HepG2 (cell line): ENCODE measurements at regions of chr2 and their contacts with region 1.

Region 1: DNA sequence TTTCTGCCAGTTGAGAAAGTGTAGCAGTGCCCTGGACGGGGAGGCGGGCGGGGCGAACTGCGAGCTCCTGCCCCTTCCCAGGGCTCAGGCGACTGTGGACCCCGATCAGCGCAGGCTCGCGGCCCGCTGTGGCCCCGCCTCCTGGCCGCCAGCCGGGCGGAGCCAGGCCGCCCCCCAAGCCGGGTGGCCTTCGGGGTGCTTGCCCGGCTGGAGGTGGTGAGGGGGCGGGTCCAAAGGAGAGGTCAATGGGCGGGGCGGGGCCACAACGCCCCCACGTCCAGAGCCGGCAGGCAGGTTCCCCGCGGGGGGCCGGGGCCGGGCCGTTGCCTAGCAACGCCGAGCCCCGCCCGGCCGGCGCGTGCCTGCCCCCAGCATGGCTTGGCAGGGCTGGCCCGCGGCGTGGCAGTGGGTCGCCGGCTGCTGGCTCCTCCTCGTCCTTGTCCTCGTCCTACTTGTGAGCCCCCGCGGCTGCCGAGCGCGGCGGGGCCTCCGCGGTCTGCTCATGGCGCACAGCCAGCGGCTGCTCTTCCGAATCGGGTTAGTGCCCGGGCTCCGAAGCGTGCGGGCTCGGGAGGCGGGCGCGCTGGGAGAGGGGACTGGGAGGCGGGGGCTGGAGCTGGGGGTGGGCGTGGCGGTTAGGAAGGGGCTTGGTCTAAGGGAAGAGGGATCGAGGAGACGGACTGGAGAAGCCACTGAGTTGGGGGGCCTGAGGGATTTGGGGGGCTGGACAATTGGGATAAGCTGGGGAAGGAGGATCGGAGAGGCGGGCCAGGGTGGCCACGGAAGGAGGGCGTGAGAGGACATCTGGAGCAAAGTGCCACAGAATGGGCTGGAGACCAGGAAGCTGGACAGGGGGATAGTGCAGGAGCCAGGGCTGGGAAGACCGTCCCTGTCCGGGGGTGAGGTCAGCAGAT is 30.8 kb upstream of the TMBIM1 start:
- DNase-seq: peak; percentile 79
- ATAC-seq: peak; percentile 83
- H3K4me3 ChIP-seq: peak overlapping the region; percentile 64 to 99 (median 78)
- H3K27ac ChIP-seq: peak overlapping the region; percentile 87
- H3K4me1 ChIP-seq: peaks cover 35% of the 10 kb centered on the region
- H3K27me3 ChIP-seq: no peaks in the 10 kb centered on the region; a peak in 1 of 5 replicates
- CTCF ChIP-seq: peak; percentile 32
- EP300 ChIP-seq: peak in 1 of 2 experiments; percentile 17; a peak in 1 of 4 replicates
- POLR2A ChIP-seq: peak; percentile 78 to 93
- RAD21 ChIP-seq: no peak

Region 2: DNA sequence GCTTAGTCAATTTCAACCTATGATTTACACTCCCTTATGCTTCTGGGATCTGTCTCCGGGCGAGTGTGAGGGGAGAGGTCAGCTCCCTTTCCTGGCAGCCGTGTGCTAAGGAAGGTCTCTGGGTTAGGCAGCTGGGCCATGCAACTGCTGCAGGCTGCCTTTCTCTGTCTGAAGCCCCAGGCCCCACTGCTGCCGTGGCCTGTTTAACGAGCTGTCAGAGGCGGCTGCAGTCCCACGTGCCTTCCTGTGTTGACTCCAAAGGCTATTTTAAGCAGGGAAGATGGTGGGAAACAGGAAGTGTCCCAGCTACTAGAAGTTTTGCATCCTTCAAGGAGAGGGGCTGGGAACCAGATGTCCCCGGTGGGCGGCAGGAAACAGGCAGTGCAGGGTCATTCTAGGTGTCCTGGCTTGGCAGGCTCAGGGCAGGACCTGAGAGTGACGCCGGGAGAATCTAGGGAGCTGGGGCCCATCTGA is 506.7 kb before region 1 on chr2:
- CTCF ChIA-PET with region 1: no interaction called
- POLR2A ChIA-PET with region 1: no interaction called
- in situ Hi-C with region 1: no loop called
- intact Hi-C with region 1: no loop called
- DNase-seq: no peak
- ATAC-seq: no peak
- H3K4me3 ChIP-seq: no peak overlapping the region
- H3K27ac ChIP-seq: no peak overlapping the region
- H3K4me1 ChIP-seq: peaks cover 43% of the 10 kb centered on the region
- H3K27me3 ChIP-seq: no peaks in the 10 kb centered on the region
- CTCF ChIP-seq: no peak
- EP300 ChIP-seq: no peak
- POLR2A ChIP-seq: no peak
- RAD21 ChIP-seq: no peak

Region 3: DNA sequence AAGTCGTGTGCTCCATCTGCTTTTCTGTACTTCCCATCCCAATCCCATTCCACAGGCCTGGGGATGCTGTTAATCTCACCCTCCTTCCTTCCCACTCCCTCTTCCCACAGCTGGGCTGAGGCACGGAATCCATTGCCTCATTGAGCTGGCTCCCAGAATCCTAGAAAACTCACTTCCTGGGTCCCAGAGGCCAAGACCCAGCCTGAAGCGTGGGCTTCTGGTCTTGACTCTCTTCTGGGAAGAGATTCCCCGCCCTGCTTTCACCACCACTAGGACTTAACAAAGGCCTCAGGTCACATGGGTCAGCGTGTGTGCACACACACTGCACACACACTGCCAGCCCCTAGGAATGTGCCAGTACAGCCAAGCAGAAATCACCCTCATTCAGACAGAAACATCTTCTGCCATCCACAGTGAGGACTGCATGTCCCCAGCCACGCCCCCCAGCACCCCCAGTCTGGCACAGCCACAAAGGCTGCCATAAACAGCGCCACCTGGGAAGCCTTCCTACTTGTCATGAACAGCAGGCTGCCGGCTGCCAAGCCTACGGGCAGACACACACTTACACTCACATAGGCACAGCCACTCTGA is 486.2 kb before region 1 on chr2:
- CTCF ChIA-PET with region 1: no interaction called
- POLR2A ChIA-PET with region 1: no interaction called
- in situ Hi-C with region 1: no loop called
- intact Hi-C with region 1: no loop called
- DNase-seq: peak; percentile 17
- ATAC-seq: peak; percentile 9
- H3K4me3 ChIP-seq: no peak overlapping the region
- H3K27ac ChIP-seq: no peak overlapping the region
- H3K4me1 ChIP-seq: peaks cover 9% of the 10 kb centered on the region; the same call in 1 of the 2 replicates
- H3K27me3 ChIP-seq: no peaks in the 10 kb centered on the region
- CTCF ChIP-seq: peak; percentile 29
- EP300 ChIP-seq: no peak
- POLR2A ChIP-seq: no peak; a peak in 1 of 4 replicates
- RAD21 ChIP-seq: no peak

Region 4: DNA sequence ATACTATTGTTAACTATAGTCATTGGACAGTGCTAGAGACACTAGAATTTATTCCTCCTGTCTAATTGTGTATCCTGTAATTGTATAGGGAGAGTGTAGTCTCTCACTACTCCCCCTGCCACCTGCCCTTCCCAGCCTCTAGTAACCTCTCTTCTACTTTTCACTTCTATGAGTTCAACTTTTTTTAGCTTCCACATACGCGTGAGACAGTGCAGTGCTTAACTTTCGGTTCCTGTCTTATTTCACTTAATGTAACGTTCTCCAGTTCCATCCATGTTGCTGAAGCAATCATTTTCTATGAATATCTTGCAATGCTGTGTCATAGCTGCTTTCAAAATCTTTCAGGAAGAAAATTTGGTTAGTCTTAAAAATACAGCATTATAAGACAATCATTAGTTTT is 276.9 kb before region 1 on chr2:
- CTCF ChIA-PET with region 1: no interaction called
- POLR2A ChIA-PET with region 1: no interaction called
- in situ Hi-C with region 1: no loop called
- intact Hi-C with region 1: no loop called
- DNase-seq: no peak
- ATAC-seq: no peak
- H3K4me3 ChIP-seq: no peak overlapping the region
- H3K27ac ChIP-seq: no peak overlapping the region
- H3K4me1 ChIP-seq: no peaks in the 10 kb centered on the region
- H3K27me3 ChIP-seq: peaks cover 0 to 2% of the 10 kb centered on the region in 2 experiments; a peak in 1 of 5 replicates
- CTCF ChIP-seq: no peak
- EP300 ChIP-seq: no peak
- POLR2A ChIP-seq: no peak
- RAD21 ChIP-seq: no peak

Region 5: GRCh38 chr2:218286570-218287459 is 36.3 kb before region 1 on chr2:
- CTCF ChIA-PET with region 1: no interaction called
- POLR2A ChIA-PET with region 1: interaction called, 64 read pairs
- in situ Hi-C with region 1: no loop called
- intact Hi-C with region 1: loop called (anchors 2 kb)
- DNase-seq: peak; percentile 96
- ATAC-seq: peak; percentile 67
- H3K4me3 ChIP-seq: peak overlapping the region in 1 of 3 experiments; percentile 43; a peak in 2 of 6 replicates
- H3K27ac ChIP-seq: peak overlapping the region; percentile 64
- H3K4me1 ChIP-seq: peaks cover 76% of the 10 kb centered on the region
- H3K27me3 ChIP-seq: no peaks in the 10 kb centered on the region; a peak in 1 of 5 replicates
- CTCF ChIP-seq: no peak
- EP300 ChIP-seq: peak in 1 of 2 experiments; percentile 50; a peak in 1 of 4 replicates
- POLR2A ChIP-seq: no peak; a peak in 1 of 4 replicates
- RAD21 ChIP-seq: no peak

Region 6: GRCh38 chr2:218312267-218312756 is 10.8 kb before region 1 on chr2:
- CTCF ChIA-PET with region 1: no interaction called
- POLR2A ChIA-PET with region 1: interaction called, 37 read pairs
- in situ Hi-C with region 1: no loop called
- intact Hi-C with region 1: loop called (anchors 1 kb)
- DNase-seq: peak; percentile 87
- ATAC-seq: peak; percentile 80
- H3K4me3 ChIP-seq: peak overlapping the region in 1 of 3 experiments; percentile 47; a peak in 1 of 6 replicates
- H3K27ac ChIP-seq: peak overlapping the region; percentile 58
- H3K4me1 ChIP-seq: peaks cover 77% of the 10 kb centered on the region
- H3K27me3 ChIP-seq: no peaks in the 10 kb centered on the region
- CTCF ChIP-seq: no peak
- EP300 ChIP-seq: no peak; a peak in 1 of 4 replicates
- POLR2A ChIP-seq: no peak
- RAD21 ChIP-seq: no peak

Region 7: GRCh38 chr2:218343591-218343990 is 20.4 kb after region 1 on chr2:
- CTCF ChIA-PET with region 1: no interaction called
- POLR2A ChIA-PET with region 1: interaction called, 10 read pairs
- in situ Hi-C with region 1: no loop called
- intact Hi-C with region 1: no loop called
- DNase-seq: no peak
- ATAC-seq: no peak
- H3K4me3 ChIP-seq: no peak overlapping the region
- H3K27ac ChIP-seq: no peak overlapping the region
- H3K4me1 ChIP-seq: no peaks in the 10 kb centered on the region
- H3K27me3 ChIP-seq: no peaks in the 10 kb centered on the region
- CTCF ChIP-seq: no peak
- EP300 ChIP-seq: no peak
- POLR2A ChIP-seq: no peak
- RAD21 ChIP-seq: no peak

Region 8: GRCh38 chr2:218387374-218388194 is 64.4 kb after region 1 on chr2:
- CTCF ChIA-PET with region 1: no interaction called
- POLR2A ChIA-PET with region 1: interaction called, 15 read pairs
- in situ Hi-C with region 1: no loop called
- intact Hi-C with region 1: no loop called
- DNase-seq: peak; percentile 86
- ATAC-seq: no peak
- H3K4me3 ChIP-seq: peak overlapping the region; percentile 9 to 57 (median 11); a peak in 3 of 6 replicates
- H3K27ac ChIP-seq: no peak overlapping the region
- H3K4me1 ChIP-seq: peaks cover 77% of the 10 kb centered on the region
- H3K27me3 ChIP-seq: peaks cover 6 to 20% of the 10 kb centered on the region in 2 experiments; a peak in 4 of 5 replicates
- CTCF ChIP-seq: no peak
- EP300 ChIP-seq: peak in 1 of 2 experiments; percentile 70; a peak in 2 of 4 replicates
- POLR2A ChIP-seq: no peak
- RAD21 ChIP-seq: no peak

Region 9: GRCh38 chr2:218406209-218406948 is 83.2 kb after region 1 on chr2:
- CTCF ChIA-PET with region 1: no interaction called
- POLR2A ChIA-PET with region 1: interaction called, 22 read pairs
- in situ Hi-C with region 1: no loop called
- intact Hi-C with region 1: no loop called
- DNase-seq: peak; percentile 92
- ATAC-seq: peak; percentile 78
- H3K4me3 ChIP-seq: peak overlapping the region; percentile 67 to 86 (median 67)
- H3K27ac ChIP-seq: peak overlapping the region; percentile 79
- H3K4me1 ChIP-seq: peaks cover 61% of the 10 kb centered on the region
- H3K27me3 ChIP-seq: no peaks in the 10 kb centered on the region
- CTCF ChIP-seq: peak; percentile 98
- EP300 ChIP-seq: peak; percentile 37 to 53; a peak in 2 of 4 replicates
- POLR2A ChIP-seq: peak in 1 of 2 experiments; percentile 23; a peak in 1 of 4 replicates
- RAD21 ChIP-seq: peak; percentile 98